ENCODE measurements at regions of chr11 and their contacts with region 1.

Region 1: DNA sequence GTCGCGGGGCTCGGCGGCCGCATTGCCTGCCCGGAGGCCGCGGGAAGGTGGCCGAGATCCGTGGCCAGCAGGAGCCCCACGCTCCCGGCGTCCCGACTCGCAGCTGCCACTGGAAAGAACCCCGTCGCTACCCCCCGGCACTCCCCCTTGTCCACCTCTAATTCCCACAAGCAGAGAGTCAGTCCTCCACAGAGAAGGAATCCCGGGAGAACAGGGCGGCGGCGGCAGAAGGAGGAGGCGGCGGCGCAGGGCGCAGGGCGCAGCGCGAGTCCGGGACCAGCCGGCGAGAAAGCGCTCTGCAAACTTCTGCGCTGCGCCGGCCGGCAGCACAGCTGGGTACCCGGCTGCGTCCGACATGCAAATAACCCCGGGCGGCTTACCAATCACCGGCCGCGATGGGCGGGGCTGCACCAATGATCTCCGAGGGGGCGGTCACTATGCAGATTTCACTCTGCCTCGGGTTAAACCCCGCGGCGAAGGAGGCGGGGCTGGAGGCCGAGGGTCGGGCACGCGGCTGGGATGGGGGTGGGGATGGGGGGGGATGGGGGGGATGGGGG is at the start of gene ABTB2:
- DNase-seq: peak; percentile 98 to 99 (median 98)
- H3K4me3 ChIP-seq: peak within 1 kb of the TSS; percentile 63
- H3K27ac ChIP-seq: peak within 1 kb of the TSS; percentile 23 to 83
- H3K4me1 ChIP-seq: peaks cover 13% of the 10 kb centered on the region
- H3K27me3 ChIP-seq: no peaks in the 10 kb centered on the region
- CTCF ChIP-seq: peak in 1 of 3 donors; percentile 12
- EP300 ChIP-seq: no peak
- POLR2A ChIP-seq: peak; percentile 94
- total RNA-seq, gene ABTB2: 1.2 to 7.2 (median 2.6) TPM

Region 2: DNA sequence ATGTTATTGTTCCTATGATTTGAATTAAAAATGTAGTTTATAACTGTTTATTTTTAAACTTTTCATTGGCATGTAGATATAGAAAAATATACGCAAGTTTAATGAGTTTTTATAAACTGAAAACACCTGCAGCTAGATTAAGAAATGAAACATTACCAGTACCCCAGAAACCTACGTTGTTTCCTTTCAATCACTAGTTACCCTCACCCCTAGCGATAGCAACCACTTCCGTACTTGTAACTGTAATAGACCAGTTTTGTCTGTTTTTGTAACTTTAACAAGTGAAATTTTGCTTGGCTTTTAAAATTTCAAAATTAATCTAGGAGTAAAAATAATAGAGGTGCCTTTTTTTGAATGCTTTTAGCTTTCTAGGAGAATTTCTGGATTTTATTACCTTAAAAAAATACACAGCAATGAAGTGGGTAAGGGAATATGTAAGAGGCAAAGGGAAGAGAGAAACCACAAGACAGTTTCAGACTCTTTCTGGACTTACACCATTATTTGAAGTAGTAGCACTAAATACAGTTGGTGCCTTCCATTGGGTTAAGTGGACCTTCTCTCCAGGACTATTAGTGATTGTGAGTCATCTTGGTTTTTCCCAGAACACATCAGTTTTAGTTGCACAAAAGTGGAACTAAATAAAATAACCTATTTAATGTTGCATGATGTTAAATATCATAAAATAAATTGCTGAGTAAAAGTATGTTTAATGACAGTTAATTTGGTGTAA is 271.1 kb before region 1 on chr11:
- intact Hi-C with region 1: no loop called
- DNase-seq: no peak
- H3K4me3 ChIP-seq: no peak overlapping the region
- H3K27ac ChIP-seq: no peak overlapping the region
- H3K4me1 ChIP-seq: no peaks in the 10 kb centered on the region
- H3K27me3 ChIP-seq: no peaks in the 10 kb centered on the region
- CTCF ChIP-seq: no peak
- EP300 ChIP-seq: no peak
- POLR2A ChIP-seq: no peak

Region 3: GRCh38 chr11:34161812-34162499 is 195.8 kb before region 1 on chr11:
- intact Hi-C with region 1: no loop called
- DNase-seq: no peak
- H3K4me3 ChIP-seq: no peak overlapping the region
- H3K27ac ChIP-seq: no peak overlapping the region
- H3K4me1 ChIP-seq: peaks cover 5% of the 10 kb centered on the region
- H3K27me3 ChIP-seq: no peaks in the 10 kb centered on the region
- CTCF ChIP-seq: no peak
- EP300 ChIP-seq: no peak
- POLR2A ChIP-seq: no peak

Region 4: GRCh38 chr11:34174412-34175041 is 183.3 kb before region 1 on chr11:
- intact Hi-C with region 1: loop called (anchors 1 to 5 kb)
- DNase-seq: peak; percentile 81 to 92 (median 88)
- H3K4me3 ChIP-seq: peak overlapping the region; percentile 6
- H3K27ac ChIP-seq: no peak overlapping the region
- H3K4me1 ChIP-seq: no peaks in the 10 kb centered on the region
- H3K27me3 ChIP-seq: no peaks in the 10 kb centered on the region
- CTCF ChIP-seq: peak; percentile 92 to 96 (median 95)
- EP300 ChIP-seq: no peak
- POLR2A ChIP-seq: no peak

Region 5: DNA sequence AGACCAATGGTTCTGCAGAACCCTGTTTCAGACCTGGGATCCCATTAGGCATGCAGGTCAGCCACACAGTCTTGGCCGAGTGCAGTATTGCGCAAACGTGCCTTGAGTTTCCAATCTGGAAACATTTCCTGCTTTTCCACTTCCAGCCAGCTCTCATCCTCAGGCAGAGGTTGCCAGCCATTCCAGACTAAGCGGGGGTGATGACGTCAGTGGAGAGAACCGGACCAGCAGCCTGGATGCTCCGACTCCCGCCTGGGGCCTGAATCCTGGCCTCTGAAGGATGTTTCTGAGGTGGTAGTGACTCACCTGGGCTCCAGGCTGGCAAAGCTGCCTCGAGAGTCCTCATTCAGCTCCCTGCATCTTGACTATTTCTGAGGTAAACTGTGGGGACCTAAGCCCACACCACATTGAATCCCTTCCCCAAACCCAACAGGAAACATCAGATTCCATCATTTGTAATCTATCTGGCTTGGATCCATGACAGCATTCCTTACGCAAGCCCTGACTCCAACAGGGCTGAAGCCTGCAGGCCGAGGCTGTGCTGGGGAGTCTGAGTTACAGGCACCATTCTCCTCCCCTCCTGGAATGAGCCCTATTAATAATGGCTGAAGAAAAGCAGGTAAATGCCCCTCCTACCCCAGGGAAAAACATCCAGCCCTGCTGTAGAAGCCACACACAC is 82.9 kb before region 1 on chr11:
- intact Hi-C with region 1: loop called in 1 of 4 experiments (anchors 10 kb)
- DNase-seq: peak; percentile 88 to 97 (median 92)
- H3K4me3 ChIP-seq: no peak overlapping the region
- H3K27ac ChIP-seq: peak overlapping the region in 1 of 2 donors; percentile 82
- H3K4me1 ChIP-seq: no peaks in the 10 kb centered on the region
- H3K27me3 ChIP-seq: no peaks in the 10 kb centered on the region
- CTCF ChIP-seq: no peak
- EP300 ChIP-seq: no peak
- POLR2A ChIP-seq: no peak

Region 6: GRCh38 chr11:34565417-34566207 is 207.8 kb after region 1 on chr11:
- intact Hi-C with region 1: no loop called
- DNase-seq: no peak
- H3K4me3 ChIP-seq: no peak overlapping the region
- H3K27ac ChIP-seq: no peak overlapping the region
- H3K4me1 ChIP-seq: no peaks in the 10 kb centered on the region
- H3K27me3 ChIP-seq: no peaks in the 10 kb centered on the region
- CTCF ChIP-seq: no peak
- EP300 ChIP-seq: no peak
- POLR2A ChIP-seq: no peak